CD14-positive monocyte (primary cell): ENCODE measurements at regions of chr7 and their contacts with region 1.

Region 1: DNA sequence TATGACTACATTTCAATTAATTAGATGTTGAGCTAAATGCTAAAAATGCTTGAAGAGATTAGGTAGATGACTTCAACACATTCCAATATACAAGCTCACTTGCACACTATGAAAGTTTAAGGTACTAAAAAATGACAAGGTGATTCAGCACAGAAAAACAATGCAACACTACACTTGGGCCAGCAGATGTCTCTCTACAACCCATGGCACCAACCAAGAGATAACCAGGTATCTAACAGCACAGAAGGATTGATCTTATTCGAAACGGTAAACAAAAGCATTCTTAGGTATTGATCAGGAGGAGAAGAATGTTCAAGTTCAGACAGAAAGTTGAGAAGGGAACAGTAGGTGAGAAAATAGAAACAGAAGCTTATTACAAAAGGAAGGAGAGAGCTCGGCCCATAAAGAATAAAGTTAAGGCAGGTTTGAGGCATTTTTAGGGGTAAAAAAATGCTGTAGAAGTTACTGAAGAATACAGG is 248.2 kb upstream of the KLF14 start:
- DNase-seq: peak; percentile 18 to 38 (median 26)
- H3K4me3 ChIP-seq: no peak overlapping the region
- H3K4me3 Mint-ChIP-seq: no peak overlapping the region
- H3K27ac ChIP-seq: no peak overlapping the region
- H3K27ac Mint-ChIP-seq: no peak overlapping the region
- H3K4me1 ChIP-seq: no peaks in the 10 kb centered on the region
- H3K4me1 Mint-ChIP-seq: no peaks in the 10 kb centered on the region
- H3K27me3 ChIP-seq: no peaks in the 10 kb centered on the region
- H3K27me3 Mint-ChIP-seq: no peaks in the 10 kb centered on the region
- CTCF ChIP-seq: peak; percentile 73

Region 2: DNA sequence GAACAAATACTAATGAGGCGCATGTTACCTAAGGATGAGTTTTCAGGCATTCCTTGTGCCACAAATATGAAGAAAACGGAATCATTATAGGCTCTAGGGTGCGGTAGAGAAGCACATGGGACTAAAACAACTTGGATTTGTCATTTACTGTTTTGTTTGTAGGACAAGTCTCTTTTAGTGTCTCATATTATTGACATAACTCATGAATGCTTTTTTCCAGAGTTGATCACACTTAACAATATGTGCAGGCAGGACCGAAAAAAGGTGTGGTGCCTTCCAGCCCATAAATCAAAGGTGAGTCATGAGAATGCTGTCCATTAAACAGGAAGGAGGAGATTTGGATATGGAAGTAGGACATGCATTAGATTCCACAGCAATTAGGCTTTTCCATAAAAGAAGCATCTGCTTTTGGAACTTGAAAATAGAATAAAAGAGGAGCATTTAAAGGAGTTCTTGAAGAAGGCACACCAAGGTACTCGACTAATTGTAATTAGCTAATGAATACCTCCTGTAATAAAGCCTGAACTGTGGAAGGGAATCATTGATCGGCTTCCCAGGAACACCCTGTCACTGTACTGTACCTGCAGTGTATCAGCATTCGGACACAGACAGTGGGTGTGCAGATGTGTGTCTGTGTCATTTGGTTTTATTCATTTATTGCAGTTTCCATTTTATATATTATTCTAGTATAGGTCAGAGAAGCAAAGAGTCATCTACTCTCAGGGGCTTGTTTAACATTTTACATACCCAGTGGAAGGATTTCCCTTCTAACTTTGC is 128.5 kb before region 1 on chr7:
- intact Hi-C with region 1: no loop called
- DNase-seq: no peak
- H3K4me3 ChIP-seq: no peak overlapping the region
- H3K4me3 Mint-ChIP-seq: no peak overlapping the region
- H3K27ac ChIP-seq: no peak overlapping the region
- H3K27ac Mint-ChIP-seq: no peak overlapping the region
- H3K4me1 ChIP-seq: no peaks in the 10 kb centered on the region
- H3K4me1 Mint-ChIP-seq: no peaks in the 10 kb centered on the region
- H3K27me3 ChIP-seq: no peaks in the 10 kb centered on the region
- H3K27me3 Mint-ChIP-seq: peaks cover 0 to 2% (median 2%) of the 10 kb centered on the region in 3 donors
- CTCF ChIP-seq: no peak

Region 3: DNA sequence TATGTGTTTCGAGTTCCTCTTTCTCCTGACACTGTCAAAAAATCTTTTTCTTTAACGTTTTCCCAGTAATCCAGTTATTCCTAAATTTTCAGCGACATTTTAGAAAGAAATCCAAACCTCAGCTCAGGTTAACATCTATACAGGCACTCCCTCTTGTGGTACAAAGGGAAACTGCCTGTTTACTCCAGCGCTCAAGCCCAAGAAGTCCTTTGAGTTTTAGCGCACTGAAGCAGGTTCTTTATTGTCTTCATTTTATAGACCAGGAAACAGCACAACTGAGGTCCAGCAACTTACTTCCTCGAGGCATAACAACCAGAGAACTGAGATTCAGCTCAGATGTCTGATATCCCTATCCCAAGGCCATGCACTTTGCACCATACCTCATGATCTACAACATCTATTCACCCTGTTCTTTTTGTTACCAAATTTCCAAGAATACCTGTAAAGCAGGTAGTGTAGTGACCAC is 58.3 kb after region 1 on chr7:
- intact Hi-C with region 1: loop called in 1 of 2 experiments (anchors 5 kb)
- DNase-seq: peak; percentile 42 to 58 (median 54)
- H3K4me3 ChIP-seq: no peak overlapping the region
- H3K4me3 Mint-ChIP-seq: peak overlapping the region in 1 of 2 donors; percentile 64
- H3K27ac ChIP-seq: no peak overlapping the region
- H3K27ac Mint-ChIP-seq: no peak overlapping the region
- H3K4me1 ChIP-seq: peaks cover 0 to 9% of the 10 kb centered on the region in 2 donors
- H3K4me1 Mint-ChIP-seq: peaks cover 17% of the 10 kb centered on the region
- H3K27me3 ChIP-seq: no peaks in the 10 kb centered on the region
- H3K27me3 Mint-ChIP-seq: no peaks in the 10 kb centered on the region
- CTCF ChIP-seq: peak; percentile 90

Region 4: GRCh38 chr7:131145026-131145425 is 162.8 kb after region 1 on chr7:
- intact Hi-C with region 1: no loop called
- DNase-seq: no peak
- H3K4me3 ChIP-seq: no peak overlapping the region
- H3K4me3 Mint-ChIP-seq: no peak overlapping the region
- H3K27ac ChIP-seq: no peak overlapping the region
- H3K27ac Mint-ChIP-seq: no peak overlapping the region
- H3K4me1 ChIP-seq: no peaks in the 10 kb centered on the region
- H3K4me1 Mint-ChIP-seq: peaks cover 2% of the 10 kb centered on the region
- H3K27me3 ChIP-seq: peaks cover 0 to 2% of the 10 kb centered on the region in 2 donors
- H3K27me3 Mint-ChIP-seq: peaks cover 6 to 9% (median 6%) of the 10 kb centered on the region in 3 donors
- CTCF ChIP-seq: no peak